Panc1 (cell line): ENCODE measurements at regions of chr20 and their contacts with region 1.

Region 1: GRCh38 chr20:50790651-50791277 is 4.1 kb upstream of the BCAS4 start:
- DNase-seq: peak; percentile 69
- ATAC-seq: peak; percentile 82
- H3K4me3 ChIP-seq: no peak overlapping the region
- H3K27ac ChIP-seq: peak overlapping the region; percentile 99
- H3K4me1 ChIP-seq: peaks cover 58% of the 10 kb centered on the region
- H3K27me3 ChIP-seq: no peaks in the 10 kb centered on the region
- CTCF ChIP-seq: peak; percentile 95

Region 2: GRCh38 chr20:50625986-50626677 is 164.6 kb before region 1 on chr20:
- CTCF ChIA-PET with region 1: interaction called, 15 read pairs
- POLR2A ChIA-PET with region 1: interaction called, 3 read pairs
- in situ Hi-C with region 1: no loop called
- intact Hi-C with region 1: no loop called
- DNase-seq: no peak
- ATAC-seq: peak; percentile 58
- H3K4me3 ChIP-seq: no peak overlapping the region
- H3K27ac ChIP-seq: peak overlapping the region; percentile 86
- H3K4me1 ChIP-seq: peaks cover 51% of the 10 kb centered on the region
- H3K27me3 ChIP-seq: no peaks in the 10 kb centered on the region
- CTCF ChIP-seq: peak; percentile 91

Region 3: GRCh38 chr20:50744143-50744792 is 46.5 kb before region 1 on chr20:
- CTCF ChIA-PET with region 1: interaction called, 18 read pairs
- POLR2A ChIA-PET with region 1: no interaction called
- in situ Hi-C with region 1: no loop called
- intact Hi-C with region 1: loop called (anchors 5 kb)
- DNase-seq: no peak
- ATAC-seq: peak; percentile 69
- H3K4me3 ChIP-seq: peak overlapping the region in 1 of 2 experiments; percentile 25; a peak in 2 of 4 replicates
- H3K27ac ChIP-seq: peak overlapping the region; percentile 99
- H3K4me1 ChIP-seq: peaks cover 86% of the 10 kb centered on the region
- H3K27me3 ChIP-seq: no peaks in the 10 kb centered on the region
- CTCF ChIP-seq: no peak; the same call in 1 of the 2 replicates

Region 4: DNA sequence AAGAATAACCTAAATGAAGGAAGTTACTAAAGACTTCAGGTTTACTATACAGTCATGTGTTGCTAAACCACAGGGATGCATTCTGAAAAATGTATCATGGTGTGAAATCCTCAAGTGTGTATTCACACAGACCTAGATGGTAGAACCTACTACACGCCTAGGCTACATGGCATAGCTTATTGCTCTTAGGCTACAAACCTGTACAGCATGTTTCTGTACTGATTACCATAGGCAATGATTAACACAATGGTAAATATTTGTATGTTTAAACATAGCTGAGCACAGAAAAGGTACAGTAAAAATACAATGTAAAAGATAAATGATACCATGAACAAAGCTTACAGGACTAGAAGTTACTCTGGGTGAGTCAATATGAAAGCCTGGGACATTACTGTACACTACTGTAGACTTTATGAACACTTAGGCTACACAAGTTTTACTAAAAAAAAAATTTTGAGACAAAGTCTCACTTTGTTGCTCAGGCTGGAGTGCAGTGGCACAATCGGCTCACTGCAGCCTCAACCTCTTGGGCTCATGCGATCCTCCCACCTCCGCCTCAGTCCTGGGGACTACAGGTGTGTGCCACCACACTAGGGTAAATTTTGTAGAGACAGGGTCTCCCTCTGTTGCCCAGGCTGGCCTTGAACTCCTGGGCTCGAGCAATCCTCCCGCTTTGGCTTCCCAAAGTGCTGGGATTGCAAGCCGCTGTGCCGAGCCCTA is 104.5 kb after region 1 on chr20:
- CTCF ChIA-PET with region 1: no interaction called
- POLR2A ChIA-PET with region 1: no interaction called
- in situ Hi-C with region 1: no loop called
- intact Hi-C with region 1: no loop called
- DNase-seq: no peak
- ATAC-seq: no peak
- H3K4me3 ChIP-seq: no peak overlapping the region
- H3K27ac ChIP-seq: no peak overlapping the region
- H3K4me1 ChIP-seq: no peaks in the 10 kb centered on the region
- H3K27me3 ChIP-seq: no peaks in the 10 kb centered on the region
- CTCF ChIP-seq: no peak

Region 5: DNA sequence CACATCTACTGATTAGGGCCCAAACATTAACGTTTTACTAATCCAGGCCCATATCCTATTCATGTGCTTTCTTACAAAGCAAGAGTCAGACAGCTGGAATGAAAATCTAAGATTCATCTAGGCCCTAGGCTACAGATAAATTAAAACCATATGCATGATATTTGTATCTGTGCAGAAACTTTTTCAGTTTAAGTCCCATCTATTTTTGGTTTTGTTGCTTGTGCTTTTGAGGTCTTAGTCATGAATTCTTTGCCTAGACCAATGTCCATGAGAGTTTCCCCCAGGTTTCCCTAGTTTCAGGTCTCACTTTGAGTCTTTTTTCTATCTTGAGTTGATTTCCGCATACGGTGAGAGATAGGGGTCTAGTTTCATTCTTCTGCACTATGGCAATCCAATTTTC is 120.3 kb after region 1 on chr20:
- CTCF ChIA-PET with region 1: interaction called, 11 read pairs
- POLR2A ChIA-PET with region 1: interaction called, 4 read pairs
- in situ Hi-C with region 1: no loop called
- intact Hi-C with region 1: no loop called
- DNase-seq: no peak
- ATAC-seq: no peak
- H3K4me3 ChIP-seq: no peak overlapping the region
- H3K27ac ChIP-seq: no peak overlapping the region
- H3K4me1 ChIP-seq: peaks cover 21% of the 10 kb centered on the region
- H3K27me3 ChIP-seq: no peaks in the 10 kb centered on the region
- CTCF ChIP-seq: no peak

Region 6: GRCh38 chr20:50929299-50930138 is 138.8 kb after region 1 on chr20:
- CTCF ChIA-PET with region 1: interaction called, 5 read pairs
- POLR2A ChIA-PET with region 1: interaction called, 17 read pairs
- in situ Hi-C with region 1: no loop called
- intact Hi-C with region 1: loop called (anchors 5 kb)
- DNase-seq: peak; percentile 89
- ATAC-seq: peak; percentile 68
- H3K4me3 ChIP-seq: peak overlapping the region; percentile 59 to 90
- H3K27ac ChIP-seq: peak overlapping the region; percentile 92
- H3K4me1 ChIP-seq: peaks cover 28% of the 10 kb centered on the region
- H3K27me3 ChIP-seq: no peaks in the 10 kb centered on the region
- CTCF ChIP-seq: peak; percentile 99